ENCODE measurements at regions of chr3 and their contacts with region 1.

Region 1: DNA sequence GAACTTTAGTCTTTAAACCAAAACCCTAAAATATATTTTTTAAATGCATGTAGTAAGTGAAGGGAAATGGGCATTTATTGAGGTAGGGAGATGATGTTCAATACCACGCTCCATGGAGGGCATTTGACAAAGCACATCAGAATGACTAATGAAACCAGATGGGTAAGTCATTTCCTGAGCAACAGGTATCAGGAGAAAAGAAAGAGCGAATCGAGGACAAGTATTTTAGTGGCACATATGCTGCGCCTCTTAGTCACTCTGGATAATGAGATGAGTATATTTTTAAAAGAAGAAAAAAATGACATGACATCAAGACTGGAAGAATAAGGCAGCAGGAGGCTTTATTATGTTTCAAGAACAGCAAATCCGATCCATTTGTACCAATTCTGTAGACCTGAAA is 129.0 kb upstream of the ARHGEF3 start:
- DNase-seq: peak; percentile 42
- ATAC-seq: peak; percentile 98
- H3K4me3 Mint-ChIP-seq: peak overlapping the region; percentile 21
- H3K27ac Mint-ChIP-seq: peak overlapping the region; percentile 86
- H3K4me1 Mint-ChIP-seq: peaks cover 73% of the 10 kb centered on the region
- H3K27me3 Mint-ChIP-seq: no peaks in the 10 kb centered on the region

Region 2: GRCh38 chr3:56825567-56826438 is 104.9 kb before region 1 on chr3:
- CTCF ChIA-PET with region 1: no interaction called
- POLR2A ChIA-PET with region 1: no interaction called
- intact Hi-C with region 1: no loop called
- DNase-seq: no peak
- ATAC-seq: no peak
- H3K4me3 Mint-ChIP-seq: no peak overlapping the region
- H3K27ac Mint-ChIP-seq: no peak overlapping the region
- H3K4me1 Mint-ChIP-seq: peaks cover 40% of the 10 kb centered on the region
- H3K27me3 Mint-ChIP-seq: no peaks in the 10 kb centered on the region

Region 3: DNA sequence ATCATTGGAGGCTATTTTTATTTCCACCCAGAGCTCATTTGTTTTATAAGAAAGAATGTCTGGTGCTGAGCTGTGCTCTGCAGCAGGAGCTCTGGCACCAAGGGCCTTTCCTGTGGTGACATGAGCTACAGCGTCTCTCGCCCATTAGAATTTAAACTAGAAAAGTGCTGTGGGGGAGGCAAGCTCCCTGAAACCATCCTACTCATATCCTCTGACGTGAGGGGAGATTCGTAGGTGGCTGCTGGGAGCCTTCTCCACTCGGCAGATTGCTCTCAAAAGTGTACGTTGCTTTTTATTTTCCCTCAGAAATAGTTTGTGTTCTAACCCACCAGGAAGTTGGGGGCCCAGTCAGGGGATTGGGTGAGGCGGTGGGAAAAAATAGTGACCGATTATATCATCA is 52.6 kb before region 1 on chr3:
- CTCF ChIA-PET with region 1: no interaction called
- POLR2A ChIA-PET with region 1: no interaction called
- intact Hi-C with region 1: loop called in 1 of 2 experiments (anchors 1 kb)
- DNase-seq: peak; percentile 79
- ATAC-seq: peak; percentile 87
- H3K4me3 Mint-ChIP-seq: peak overlapping the region; percentile 64
- H3K27ac Mint-ChIP-seq: peak overlapping the region; percentile 94
- H3K4me1 Mint-ChIP-seq: peaks cover 90% of the 10 kb centered on the region
- H3K27me3 Mint-ChIP-seq: no peaks in the 10 kb centered on the region

Region 4: DNA sequence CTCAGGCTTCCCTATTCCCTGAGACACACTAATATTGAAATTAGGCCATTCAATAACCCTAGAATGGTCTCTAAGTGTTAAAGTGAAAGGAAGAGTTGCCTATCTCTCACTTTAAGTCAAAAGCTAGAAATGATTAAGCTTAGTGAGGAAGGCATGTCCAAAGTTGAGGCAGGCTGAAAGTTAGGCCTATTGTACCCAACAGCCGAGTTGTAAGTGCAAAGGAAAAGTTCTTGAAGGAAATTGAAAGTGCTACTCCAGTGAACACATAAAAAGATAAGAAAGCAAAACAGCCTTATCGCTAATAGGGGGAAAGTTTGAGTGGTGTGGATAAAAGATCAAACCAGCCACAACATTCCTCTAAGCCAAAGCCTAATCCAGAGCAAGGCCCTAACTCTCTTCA is 11.8 kb after region 1 on chr3:
- CTCF ChIA-PET with region 1: no interaction called
- POLR2A ChIA-PET with region 1: no interaction called
- intact Hi-C with region 1: loop called in 1 of 2 experiments (anchors 1 kb)
- DNase-seq: no peak
- ATAC-seq: peak; percentile 88
- H3K4me3 Mint-ChIP-seq: no peak overlapping the region
- H3K27ac Mint-ChIP-seq: peak overlapping the region; percentile 52
- H3K4me1 Mint-ChIP-seq: peaks cover 20% of the 10 kb centered on the region
- H3K27me3 Mint-ChIP-seq: no peaks in the 10 kb centered on the region